Activated T-helper 2 cell treated with anti-CD3 and anti-CD28 coated beads, Interferon-gamma antibody, Interleukin-2, Interleukin-4, amounts not matched to agents 10 μg/mL and 5 μg/mL and 100 μg/mL, durations not matched to agents 14 hours and 24 hours and 36 hours (primary cell): ENCODE measurements at regions of chr5 and their contacts with region 1.

Region 1: DNA sequence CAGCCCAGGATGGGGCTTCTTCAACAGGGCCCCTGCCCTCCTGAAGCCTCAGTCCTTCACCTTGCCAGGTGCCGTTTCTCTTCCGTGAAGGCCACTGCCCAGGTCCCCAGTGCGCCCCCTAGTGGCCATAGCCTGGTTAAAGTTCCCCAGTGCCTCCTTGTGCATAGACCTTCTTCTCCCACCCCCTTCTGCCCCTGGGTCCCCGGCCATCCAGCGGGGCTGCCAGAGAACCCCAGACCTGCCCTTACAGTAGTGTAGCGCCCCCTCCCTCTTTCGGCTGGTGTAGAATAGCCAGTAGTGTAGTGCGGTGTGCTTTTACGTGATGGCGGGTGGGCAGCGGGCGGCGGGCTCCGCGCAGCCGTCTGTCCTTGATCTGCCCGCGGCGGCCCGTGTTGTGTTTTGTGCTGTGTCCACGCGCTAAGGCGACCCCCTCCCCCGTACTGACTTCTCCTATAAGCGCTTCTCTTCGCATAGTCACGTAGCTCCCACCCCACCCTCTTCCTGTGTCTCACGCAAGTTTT is 23.6 kb downstream of the PCDHGC5 start:
- DNase-seq: peak; percentile 73
- H3K4me3 Mint-ChIP-seq: peak overlapping the region; percentile 78
- H3K27ac Mint-ChIP-seq: peak overlapping the region; percentile 83
- H3K4me1 Mint-ChIP-seq: peaks cover 30% of the 10 kb centered on the region
- H3K27me3 Mint-ChIP-seq: no peaks in the 10 kb centered on the region

Region 2: DNA sequence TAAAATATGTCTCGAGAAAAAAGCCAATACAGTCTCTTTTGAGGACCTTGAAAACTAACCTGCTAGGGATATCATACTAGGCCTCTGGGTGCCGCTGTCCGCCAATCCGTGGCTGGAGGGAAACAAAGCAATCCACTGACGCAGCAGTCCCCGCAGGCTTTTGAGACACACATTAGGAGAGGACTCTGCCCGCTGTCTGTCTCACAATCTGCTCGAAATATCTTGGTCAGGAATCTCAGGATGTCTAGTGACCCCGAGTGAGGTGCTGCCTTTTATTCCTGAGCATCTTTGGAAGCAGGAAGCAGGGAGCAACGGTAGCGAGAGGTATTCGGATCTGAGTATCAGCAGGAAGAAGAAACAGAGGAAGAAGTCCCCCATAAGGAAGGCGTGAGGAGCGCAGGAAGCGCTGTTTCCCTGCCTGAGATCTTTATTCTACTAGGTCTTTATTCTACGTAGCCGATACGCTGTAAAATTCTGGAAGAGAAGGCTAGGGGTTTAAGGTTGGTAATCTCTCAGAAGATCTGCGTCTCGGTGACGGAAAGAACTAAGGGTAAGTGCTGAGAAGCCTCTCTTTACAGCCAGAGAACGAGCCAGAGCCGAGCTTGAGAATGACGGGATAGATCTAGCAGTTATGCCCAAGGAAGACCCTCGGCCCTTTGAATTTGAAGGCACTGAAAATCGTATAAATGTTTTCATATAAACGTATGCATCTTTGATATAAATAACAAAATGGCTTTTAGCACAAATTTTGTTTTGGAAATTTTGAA is 186.2 kb before region 1 on chr5:
- intact Hi-C with region 1: loop called (anchors 2 kb)
- DNase-seq: peak; percentile 58
- H3K4me3 Mint-ChIP-seq: peak overlapping the region; percentile 95
- H3K27ac Mint-ChIP-seq: peak overlapping the region; percentile 77
- H3K4me1 Mint-ChIP-seq: peaks cover 9% of the 10 kb centered on the region
- H3K27me3 Mint-ChIP-seq: peaks cover 6% of the 10 kb centered on the region

Region 3: DNA sequence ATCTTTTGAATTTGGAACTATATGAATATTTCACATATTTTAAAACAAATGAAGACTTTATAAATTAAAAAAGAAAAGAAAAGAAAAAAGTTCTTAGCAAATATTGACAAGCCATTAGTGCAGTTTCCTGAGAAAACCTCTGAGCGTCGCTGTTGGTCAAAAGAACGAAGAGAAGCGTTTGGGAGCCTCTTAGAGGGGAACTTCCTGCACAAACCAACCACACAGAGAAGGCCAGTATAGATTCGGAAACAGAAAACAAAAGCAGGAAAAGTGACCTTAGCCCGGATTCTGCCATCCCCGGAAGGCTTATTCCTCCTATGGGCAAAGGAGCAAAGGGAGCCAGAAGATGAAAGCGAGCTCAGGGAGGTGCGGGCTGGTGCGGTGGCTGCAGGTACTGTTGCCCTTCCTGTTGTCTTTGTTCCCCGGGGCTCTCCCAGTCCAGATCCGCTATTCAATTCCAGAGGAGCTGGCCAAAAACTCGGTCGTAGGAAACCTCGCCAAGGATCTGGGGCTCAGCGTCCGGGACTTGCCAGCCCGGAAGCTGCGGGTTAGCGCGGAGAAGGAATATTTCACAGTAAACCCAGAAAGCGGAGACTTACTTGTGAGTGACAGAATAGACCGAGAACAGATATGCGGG is 152.5 kb before region 1 on chr5 and contains the start of gene PCDHGB2:
- intact Hi-C with region 1: loop called (anchors 5 kb)
- DNase-seq: no peak
- H3K4me3 Mint-ChIP-seq: peak within 1 kb of the TSS; percentile 85
- H3K27ac Mint-ChIP-seq: peak within 1 kb of the TSS; percentile 62
- H3K4me1 Mint-ChIP-seq: peaks cover 2% of the 10 kb centered on the region
- H3K27me3 Mint-ChIP-seq: peaks cover 34% of the 10 kb centered on the region
- total RNA-seq, gene PCDHGB2: 0.85 and 0.91 TPM in 2 replicates

Region 4: DNA sequence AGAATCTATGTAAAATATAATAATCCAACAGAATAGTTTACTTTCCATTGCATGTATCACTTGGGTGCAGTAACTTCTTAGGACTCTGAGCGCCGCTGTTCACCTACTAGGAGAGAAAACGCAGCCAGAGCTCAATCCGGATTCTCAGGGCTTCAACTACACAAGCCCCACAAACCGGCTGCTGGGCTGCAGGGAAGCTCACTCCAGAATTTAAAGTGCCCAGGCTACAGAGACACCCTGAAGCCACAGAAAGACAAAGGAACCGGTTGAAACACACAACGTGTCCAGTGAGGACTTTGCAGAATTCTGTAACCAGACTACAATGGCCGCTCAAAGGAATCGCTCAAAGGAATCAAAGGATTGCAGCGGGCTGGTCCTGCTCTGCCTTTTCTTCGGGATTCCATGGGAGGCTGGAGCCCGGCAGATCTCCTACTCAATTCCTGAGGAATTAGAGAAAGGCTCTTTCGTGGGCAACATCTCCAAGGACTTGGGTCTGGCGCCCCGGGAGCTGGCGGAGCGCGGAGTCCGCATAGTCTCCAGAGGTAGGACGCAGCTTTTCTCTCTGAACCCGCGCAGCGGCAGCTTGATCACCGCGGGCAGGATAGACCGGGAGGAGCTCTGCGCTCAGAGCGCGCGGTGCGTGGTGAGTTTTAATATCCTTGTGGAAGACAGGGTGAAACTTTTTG is 99.5 kb before region 1 on chr5 and contains the start of gene PCDHGA10:
- intact Hi-C with region 1: loop called (anchors 2 kb)
- DNase-seq: no peak
- H3K4me3 Mint-ChIP-seq: peak within 1 kb of the TSS; percentile 82
- H3K27ac Mint-ChIP-seq: no peak within 1 kb of the TSS
- H3K4me1 Mint-ChIP-seq: peaks cover 18% of the 10 kb centered on the region
- H3K27me3 Mint-ChIP-seq: peaks cover 60% of the 10 kb centered on the region
- total RNA-seq, gene PCDHGA10: 0.21 and 0.34 TPM in 2 replicates

Region 5: GRCh38 chr5:141475625-141476131 is 36.8 kb before region 1 on chr5 and contains the start of gene PCDHGC3:
- intact Hi-C with region 1: loop called (anchors 5 kb)
- DNase-seq: no peak
- H3K4me3 Mint-ChIP-seq: peak within 1 kb of the TSS; percentile 85
- H3K27ac Mint-ChIP-seq: no peak within 1 kb of the TSS
- H3K4me1 Mint-ChIP-seq: peaks cover 12% of the 10 kb centered on the region
- H3K27me3 Mint-ChIP-seq: peaks cover 71% of the 10 kb centered on the region
- total RNA-seq, gene PCDHGC3: 0.21 and 0.23 TPM in 2 replicates

Region 6: GRCh38 chr5:141524604-141525597 is 12.5 kb after region 1 on chr5:
- intact Hi-C with region 1: loop called (anchors 1 kb)
- DNase-seq: peak; percentile 38
- H3K4me3 Mint-ChIP-seq: no peak overlapping the region
- H3K27ac Mint-ChIP-seq: no peak overlapping the region
- H3K4me1 Mint-ChIP-seq: peaks cover 28% of the 10 kb centered on the region
- H3K27me3 Mint-ChIP-seq: no peaks in the 10 kb centered on the region

Region 7: GRCh38 chr5:141564216-141564692 is 51.8 kb after region 1 on chr5:
- intact Hi-C with region 1: loop called (anchors 5 kb)
- DNase-seq: peak; percentile 60
- H3K4me3 Mint-ChIP-seq: no peak overlapping the region
- H3K27ac Mint-ChIP-seq: peak overlapping the region; percentile 85
- H3K4me1 Mint-ChIP-seq: peaks cover 23% of the 10 kb centered on the region
- H3K27me3 Mint-ChIP-seq: no peaks in the 10 kb centered on the region

Region 8: DNA sequence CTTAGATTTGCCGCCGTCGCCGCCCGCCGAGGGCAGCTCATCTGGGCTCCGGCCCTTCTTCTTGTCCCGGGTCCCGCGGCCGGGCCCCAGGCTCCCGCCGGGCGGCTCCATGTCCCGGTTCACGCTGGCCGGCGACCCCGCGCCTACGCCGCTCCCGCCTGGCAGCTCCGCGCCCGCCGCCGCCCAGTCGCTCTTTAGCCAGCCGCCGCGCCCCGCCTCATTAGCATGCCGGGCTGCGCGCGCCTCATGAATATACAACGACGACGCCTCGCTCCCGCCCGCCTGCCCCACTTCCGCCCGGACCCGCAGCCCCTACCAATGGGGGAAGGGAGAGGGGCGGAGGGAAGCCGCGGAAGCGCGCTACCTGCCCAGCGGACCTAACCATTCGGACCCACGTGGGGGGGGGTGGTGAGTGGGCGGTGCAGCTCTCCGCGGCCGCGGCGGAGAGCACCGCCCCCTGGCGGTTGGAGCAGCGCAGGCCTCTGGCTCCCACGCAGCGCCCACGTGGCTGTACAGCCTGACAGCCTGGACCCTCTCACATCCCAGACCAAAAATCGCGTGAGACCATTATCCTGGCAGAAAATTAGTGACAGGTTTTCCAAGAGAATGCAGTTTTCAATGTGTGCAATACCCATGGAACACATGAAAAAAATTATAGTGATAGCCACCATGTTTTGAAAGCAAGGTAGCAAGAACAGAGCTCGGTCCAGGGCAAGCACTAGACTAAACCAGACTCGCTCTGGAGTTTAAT is 106.5 kb after region 1 on chr5 and contains the start of gene DIAPH1:
- intact Hi-C with region 1: no loop called
- DNase-seq: peak; percentile 95
- H3K4me3 Mint-ChIP-seq: peak within 1 kb of the TSS; percentile 100
- H3K27ac Mint-ChIP-seq: peak within 1 kb of the TSS; percentile 98
- H3K4me1 Mint-ChIP-seq: peaks cover 49% of the 10 kb centered on the region
- H3K27me3 Mint-ChIP-seq: no peaks in the 10 kb centered on the region
- total RNA-seq, gene DIAPH1: 228 and 234 TPM in 2 replicates